ENCODE measurements at regions of chr2 and their contacts with region 1.

Region 1: GRCh38 chr2:219218732-219219701 is at the start of gene ABCB6:
- DNase-seq: peak; percentile 86
- H3K4me3 Mint-ChIP-seq: peak within 1 kb of the TSS; percentile 87
- H3K27ac Mint-ChIP-seq: peak within 1 kb of the TSS; percentile 86
- H3K4me1 Mint-ChIP-seq: peaks cover 23% of the 10 kb centered on the region
- H3K27me3 Mint-ChIP-seq: no peaks in the 10 kb centered on the region
- total RNA-seq, gene ABCB6: 31.9 and 32.9 TPM in 2 replicates

Region 2: GRCh38 chr2:219229305-219230058 is 10.5 kb after region 1 on chr2 and contains the starts of genes ANKZF1 and ATG9A:
- intact Hi-C with region 1: loop called (anchors 1 kb)
- DNase-seq: peak; percentile 98
- H3K4me3 Mint-ChIP-seq: peak within 1 kb of the TSS; percentile 97
- H3K27ac Mint-ChIP-seq: peak within 1 kb of the TSS; percentile 99
- H3K4me1 Mint-ChIP-seq: peaks cover 47% of the 10 kb centered on the region
- H3K27me3 Mint-ChIP-seq: no peaks in the 10 kb centered on the region
- total RNA-seq, gene ANKZF1: 112 and 117 TPM in 2 replicates
- total RNA-seq, gene ATG9A: 55.3 and 57.0 TPM in 2 replicates

Region 3: DNA sequence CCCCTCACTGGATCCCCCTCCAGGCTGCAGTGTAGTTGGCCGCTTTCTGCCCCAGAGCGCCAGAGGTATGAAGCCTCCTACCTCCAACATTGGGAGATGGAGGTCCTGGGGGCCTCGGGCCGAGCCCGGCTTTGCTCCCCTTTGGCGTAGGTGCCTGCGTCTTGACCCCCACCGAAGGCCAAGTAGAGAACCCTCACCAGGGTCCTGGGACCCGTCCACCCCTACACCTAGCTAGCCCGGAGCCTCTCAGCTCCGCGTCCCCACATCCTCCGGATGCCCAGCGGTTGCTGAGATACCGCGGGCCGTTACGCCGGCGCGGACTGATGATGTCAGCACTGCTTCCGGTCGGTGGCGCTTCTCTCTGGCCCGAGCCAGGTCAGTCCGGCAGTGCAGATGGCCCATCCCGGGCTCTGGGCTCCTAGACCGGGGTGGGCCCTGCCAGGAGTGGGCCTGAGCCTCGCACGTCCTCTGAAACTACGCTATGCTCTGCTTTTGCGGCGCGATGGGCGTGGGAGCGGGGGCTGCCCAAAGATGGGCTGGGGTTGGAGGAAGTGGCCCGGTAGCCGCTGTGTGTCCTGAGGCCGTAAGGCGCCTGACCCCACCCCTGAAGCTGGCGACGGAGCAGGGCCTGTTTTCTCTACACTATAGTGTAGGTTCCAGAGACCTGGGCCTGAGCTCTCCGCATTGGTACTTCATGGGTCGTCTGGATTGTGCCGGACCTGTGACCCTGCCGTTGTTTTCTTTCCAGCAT is 26.3 kb after region 1 on chr2 and contains the starts of genes GLB1L and STK16:
- intact Hi-C with region 1: loop called (anchors 1 kb)
- DNase-seq: peak; percentile 89
- H3K4me3 Mint-ChIP-seq: peak within 1 kb of the TSS; percentile 99
- H3K27ac Mint-ChIP-seq: peak within 1 kb of the TSS; percentile 99
- H3K4me1 Mint-ChIP-seq: peaks cover 57% of the 10 kb centered on the region
- H3K27me3 Mint-ChIP-seq: no peaks in the 10 kb centered on the region
- total RNA-seq, gene GLB1L: 4.6 and 4.9 TPM in 2 replicates
- total RNA-seq, gene STK16: 30.1 and 30.6 TPM in 2 replicates

Region 4: DNA sequence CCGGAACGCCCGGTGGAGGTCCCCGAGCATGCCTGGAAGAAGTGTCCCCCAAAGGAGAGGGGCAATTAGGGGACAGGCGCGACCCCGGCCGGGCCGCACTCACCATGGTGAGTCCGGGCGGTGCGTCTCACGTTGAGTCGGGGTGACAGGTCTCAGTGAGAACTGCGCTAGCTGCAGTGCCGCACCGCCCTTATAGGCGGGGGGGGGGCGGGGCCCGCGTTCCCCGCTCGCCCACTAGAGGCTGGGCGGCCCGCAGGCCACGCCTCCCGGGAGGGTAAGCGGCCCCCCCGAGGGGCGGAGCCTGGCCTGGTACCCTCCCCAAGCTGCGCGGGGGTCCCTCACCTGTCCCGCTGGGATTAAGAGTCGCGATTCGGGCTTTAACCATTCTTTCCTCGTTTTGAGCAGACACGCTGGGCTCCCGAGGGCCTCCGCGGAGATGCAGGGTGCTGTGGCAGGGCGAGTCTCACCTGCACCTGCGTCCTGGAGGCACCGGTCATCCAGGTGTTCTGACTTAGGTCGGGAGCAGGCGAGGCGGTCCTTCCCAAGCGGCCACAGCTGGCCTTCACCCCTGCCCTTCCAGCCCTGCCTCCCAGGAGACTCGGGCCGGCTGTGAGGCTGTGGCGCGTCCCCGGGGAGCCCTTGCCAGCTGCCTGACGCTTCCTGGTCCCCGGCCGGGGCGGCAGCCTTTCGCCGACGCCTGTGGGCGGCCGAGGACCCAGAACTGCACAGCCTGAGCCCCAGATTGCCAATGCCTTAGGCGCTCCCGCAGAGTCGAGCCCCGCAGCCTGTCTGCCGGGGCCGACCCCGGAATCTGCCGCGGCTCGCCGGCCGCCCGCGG is 35.0 kb after region 1 on chr2 and contains the start of gene TUBA4A:
- intact Hi-C with region 1: loop called (anchors 1 kb)
- DNase-seq: peak; percentile 87
- H3K4me3 Mint-ChIP-seq: peak within 1 kb of the TSS; percentile 93
- H3K27ac Mint-ChIP-seq: peak within 1 kb of the TSS; percentile 98
- H3K4me1 Mint-ChIP-seq: peaks cover 50% of the 10 kb centered on the region
- H3K27me3 Mint-ChIP-seq: no peaks in the 10 kb centered on the region
- total RNA-seq, gene TUBA4A: 211 and 217 TPM in 2 replicates

Region 5: DNA sequence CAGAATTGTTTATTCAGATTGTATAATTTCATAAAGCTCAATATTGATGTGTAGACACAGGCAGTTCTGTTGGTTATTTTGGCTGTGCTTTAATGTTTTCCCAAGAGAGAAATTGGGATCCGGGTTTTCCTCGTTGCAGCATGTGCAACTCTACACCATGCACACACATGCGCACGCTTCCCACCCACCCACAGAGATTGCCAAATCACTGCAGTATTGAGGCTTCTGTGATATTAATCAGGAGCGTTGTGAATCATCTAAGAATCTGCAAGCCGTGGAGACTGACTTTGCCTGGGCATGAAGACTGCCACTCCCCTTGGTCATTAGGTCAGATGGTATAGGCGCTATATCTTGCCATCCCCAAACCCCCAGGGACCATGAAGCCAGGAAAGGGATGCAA is 979.9 kb after region 1 on chr2:
- intact Hi-C with region 1: no loop called
- DNase-seq: no peak
- H3K4me3 Mint-ChIP-seq: no peak overlapping the region
- H3K27ac Mint-ChIP-seq: no peak overlapping the region
- H3K4me1 Mint-ChIP-seq: no peaks in the 10 kb centered on the region
- H3K27me3 Mint-ChIP-seq: peaks cover 3% of the 10 kb centered on the region